Activated CD8-positive, alpha-beta T cell treated with anti-CD3 and anti-CD28 coated beads for 36 hours (primary cell): ENCODE measurements at regions of chr17 and their contacts with region 1.

Region 1: GRCh38 chr17:4597975-4598374 is 13.6 kb downstream of the SMTNL2 start:
- DNase-seq: no peak
- ATAC-seq: no peak
- H3K4me3 Mint-ChIP-seq: no peak overlapping the region
- H3K27ac Mint-ChIP-seq: no peak overlapping the region
- H3K4me1 Mint-ChIP-seq: peaks cover 4% of the 10 kb centered on the region
- H3K27me3 Mint-ChIP-seq: peaks cover 3% of the 10 kb centered on the region
- CTCF ChIP-seq: no peak

Region 2: GRCh38 chr17:4476511-4477070 is 121.4 kb before region 1 on chr17:
- CTCF ChIA-PET with region 1: no interaction called
- POLR2A ChIA-PET with region 1: no interaction called
- intact Hi-C with region 1: no loop called
- DNase-seq: no peak
- ATAC-seq: no peak
- H3K4me3 Mint-ChIP-seq: no peak overlapping the region
- H3K27ac Mint-ChIP-seq: no peak overlapping the region
- H3K4me1 Mint-ChIP-seq: peaks cover 24% of the 10 kb centered on the region
- H3K27me3 Mint-ChIP-seq: no peaks in the 10 kb centered on the region
- CTCF ChIP-seq: no peak

Region 3: DNA sequence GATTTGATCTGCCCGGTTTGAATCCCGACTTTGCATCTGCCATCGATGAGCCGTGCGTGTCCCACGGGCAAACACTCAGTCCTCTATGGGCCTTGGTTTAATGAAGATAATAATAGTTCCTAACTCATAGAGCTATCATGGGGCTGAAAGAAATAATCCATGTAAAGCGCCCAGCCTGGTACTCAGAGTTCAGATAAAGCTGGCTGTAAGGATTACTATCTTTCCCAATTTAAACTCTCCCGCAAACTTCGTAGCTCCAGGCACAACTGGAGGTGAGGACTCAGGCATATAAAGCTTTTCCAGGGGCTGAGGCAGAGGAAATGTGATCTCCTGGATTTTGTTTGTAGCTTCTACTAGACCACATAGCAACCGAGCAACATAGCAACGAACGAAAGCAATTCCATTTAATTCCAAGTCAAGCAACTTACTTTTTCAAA is 27.2 kb after region 1 on chr17:
- CTCF ChIA-PET with region 1: interaction called, 11 read pairs
- POLR2A ChIA-PET with region 1: no interaction called
- intact Hi-C with region 1: no loop called
- DNase-seq: no peak
- ATAC-seq: no peak
- H3K4me3 Mint-ChIP-seq: no peak overlapping the region
- H3K27ac Mint-ChIP-seq: no peak overlapping the region
- H3K4me1 Mint-ChIP-seq: no peaks in the 10 kb centered on the region
- H3K27me3 Mint-ChIP-seq: peaks cover 6% of the 10 kb centered on the region
- CTCF ChIP-seq: no peak